Activated CD4-positive, alpha-beta memory T cell treated with anti-CD3 and anti-CD28 coated beads, Interleukin-2, amount 10 ng/mL, durations not matched to agents 7 days and 5 days (primary cell): ENCODE measurements at regions of chr7 and their contacts with region 1.

Region 1: GRCh38 chr7:56063882-56064625 is at the start of gene SUMF2:
- DNase-seq: peak; percentile 89
- H3K4me3 Mint-ChIP-seq: peak within 1 kb of the TSS; percentile 87
- H3K27ac Mint-ChIP-seq: peak within 1 kb of the TSS; percentile 82
- H3K4me1 Mint-ChIP-seq: peaks cover 43% of the 10 kb centered on the region
- H3K27me3 Mint-ChIP-seq: no peaks in the 10 kb centered on the region
- total RNA-seq, gene SUMF2: 118 to 119 TPM

Region 2: DNA sequence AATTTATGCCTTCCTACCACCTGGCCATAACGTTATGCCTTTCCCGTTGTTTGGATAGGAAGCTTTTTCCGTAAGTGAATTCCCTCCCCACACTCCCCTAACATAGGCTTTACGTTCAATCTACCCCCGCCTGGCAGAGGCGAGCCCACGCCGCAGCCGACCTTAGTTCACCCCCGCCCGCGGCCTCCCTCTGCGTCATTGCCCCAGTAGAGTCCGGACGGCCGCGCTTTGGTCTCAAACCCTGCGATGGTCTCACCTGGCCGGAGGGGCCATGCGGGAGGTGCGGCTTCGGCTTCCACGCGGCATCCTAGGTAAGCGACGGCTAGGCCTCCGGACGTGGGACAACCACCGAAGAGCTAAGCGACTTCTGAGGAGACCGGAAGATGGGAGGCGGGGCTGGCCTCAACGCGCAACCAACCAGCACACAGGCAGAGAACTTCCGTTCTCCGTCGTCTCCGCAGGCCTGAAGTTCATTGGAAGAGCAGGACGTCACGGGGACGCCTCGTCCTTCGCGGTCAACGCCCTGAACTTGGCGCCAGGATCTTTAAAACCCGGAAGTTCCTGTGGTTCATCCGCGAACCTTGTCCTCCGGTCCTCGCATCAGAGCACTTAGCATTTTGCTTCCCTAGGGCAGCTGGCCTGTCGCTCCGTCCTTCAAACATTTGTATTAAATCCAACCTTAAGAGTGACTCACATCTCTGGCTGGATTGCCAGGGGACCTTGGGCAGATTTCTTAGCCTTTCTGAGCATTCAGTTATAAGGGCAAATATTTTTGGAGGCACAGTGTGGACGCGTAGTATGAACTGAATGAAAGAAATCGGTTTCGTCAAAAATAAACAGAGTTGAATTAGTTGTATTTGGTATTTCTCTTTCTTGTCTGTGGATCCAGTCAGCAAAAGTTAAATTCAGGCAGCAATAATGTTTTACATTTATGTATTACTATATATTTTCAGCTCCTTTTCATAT is 42.3 kb after region 1 on chr7 and contains the start of gene CHCHD2:
- CTCF ChIA-PET with region 1: interaction called, 14 read pairs
- POLR2A ChIA-PET with region 1: interaction called, 33 read pairs
- DNase-seq: peak; percentile 96
- H3K4me3 Mint-ChIP-seq: peak within 1 kb of the TSS; percentile 99
- H3K27ac Mint-ChIP-seq: peak within 1 kb of the TSS; percentile 94
- H3K4me1 Mint-ChIP-seq: peaks cover 44% of the 10 kb centered on the region
- H3K27me3 Mint-ChIP-seq: no peaks in the 10 kb centered on the region
- total RNA-seq, gene CHCHD2: 482 to 505 TPM

Region 3: GRCh38 chr7:56174810-56175760 is 111.0 kb after region 1 on chr7:
- CTCF ChIA-PET with region 1: no interaction called
- POLR2A ChIA-PET with region 1: no interaction called
- DNase-seq: no peak
- H3K4me3 Mint-ChIP-seq: no peak overlapping the region
- H3K27ac Mint-ChIP-seq: no peak overlapping the region
- H3K4me1 Mint-ChIP-seq: no peaks in the 10 kb centered on the region
- H3K27me3 Mint-ChIP-seq: no peaks in the 10 kb centered on the region